Sigmoid colon (tissue), 7 donors: ENCODE measurements at regions of chr5 and their contacts with region 1.

Region 1: DNA sequence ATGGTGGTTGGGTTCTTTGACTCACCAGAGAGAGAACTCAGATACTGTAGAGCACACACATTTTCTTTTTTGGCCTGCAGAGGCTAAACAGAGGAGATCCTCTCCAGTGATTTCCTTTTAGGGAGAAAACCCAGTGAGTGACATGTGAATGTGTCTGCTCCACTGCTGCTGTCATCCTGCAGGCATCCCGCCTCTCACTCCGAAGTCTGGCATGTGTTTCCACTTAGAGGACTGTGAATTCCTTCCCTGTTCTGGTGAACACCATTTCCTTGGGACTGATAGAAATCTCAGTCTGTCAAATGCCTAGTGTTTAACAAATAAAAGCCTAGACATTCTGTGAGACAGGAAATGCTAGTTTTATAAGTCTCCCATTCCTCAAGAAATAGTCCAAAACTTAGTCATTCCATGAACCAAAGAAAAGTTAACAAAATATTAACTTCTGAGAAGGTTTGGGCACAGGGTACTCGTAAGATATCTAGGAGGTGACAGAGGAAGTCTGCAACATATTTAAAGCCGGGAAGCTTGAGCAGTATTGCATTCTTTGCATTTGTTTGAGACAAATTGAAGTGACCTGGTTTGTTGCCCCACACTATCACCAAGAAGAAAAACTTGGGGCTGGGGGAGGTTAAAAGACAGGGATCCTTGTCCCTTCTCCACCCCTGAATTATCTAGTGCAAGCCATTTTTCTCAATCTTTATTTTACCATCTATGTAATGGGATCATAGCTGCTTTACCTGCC is 74.9 kb upstream of the NIPAL4 start:
- DNase-seq: peak; percentile 91
- H3K4me3 ChIP-seq: no peak overlapping the region
- H3K27ac ChIP-seq: peak overlapping the region; percentile 82 to 94 (median 86)
- H3K4me1 ChIP-seq: peaks cover 0 to 90% (median 73%) of the 10 kb centered on the region in 4 donors
- H3K27me3 ChIP-seq: no peaks in the 10 kb centered on the region
- CTCF ChIP-seq: no peak
- EP300 ChIP-seq: peak in 3 of 4 donors; percentile 43 to 78 (median 75)
- POLR2A ChIP-seq: no peak

Region 2: GRCh38 chr5:157464519-157465171 is 79.5 kb after region 1 on chr5:
- intact Hi-C with region 1: loop called (anchors 5 kb)
- DNase-seq: peak; percentile 83
- H3K4me3 ChIP-seq: no peak overlapping the region
- H3K27ac ChIP-seq: peak overlapping the region; percentile 53 to 81 (median 72)
- H3K4me1 ChIP-seq: peaks cover 0 to 55% (median 34%) of the 10 kb centered on the region in 4 donors
- H3K27me3 ChIP-seq: no peaks in the 10 kb centered on the region
- CTCF ChIP-seq: no peak
- EP300 ChIP-seq: peak in 2 of 4 donors; percentile 17 to 37
- POLR2A ChIP-seq: no peak

Region 3: DNA sequence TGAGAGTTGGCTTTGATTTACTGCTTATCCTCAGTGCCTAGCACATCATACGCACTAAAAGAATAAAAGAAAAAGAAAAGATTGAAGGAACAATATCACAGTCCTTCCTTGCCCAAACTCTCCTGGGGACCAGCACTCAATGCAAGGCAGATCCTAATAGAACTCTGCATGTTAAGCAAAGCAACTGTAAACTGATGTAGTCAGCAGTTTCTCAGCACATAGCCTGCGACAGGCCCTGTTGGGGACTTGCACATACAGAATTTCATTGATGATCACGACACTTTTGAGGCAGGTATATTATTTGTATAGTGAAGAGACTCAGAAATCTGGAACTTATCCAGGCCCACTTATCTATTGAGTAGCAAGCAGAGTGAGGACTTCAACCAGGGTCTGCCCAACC is 90.3 kb after region 1 on chr5:
- intact Hi-C with region 1: no loop called
- DNase-seq: no peak
- H3K4me3 ChIP-seq: no peak overlapping the region
- H3K27ac ChIP-seq: peak overlapping the region in 3 of 4 donors; percentile 81 to 88 (median 86)
- H3K4me1 ChIP-seq: peaks cover 0 to 87% (median 54%) of the 10 kb centered on the region in 4 donors
- H3K27me3 ChIP-seq: no peaks in the 10 kb centered on the region
- CTCF ChIP-seq: no peak
- EP300 ChIP-seq: no peak
- POLR2A ChIP-seq: no peak

Region 4: DNA sequence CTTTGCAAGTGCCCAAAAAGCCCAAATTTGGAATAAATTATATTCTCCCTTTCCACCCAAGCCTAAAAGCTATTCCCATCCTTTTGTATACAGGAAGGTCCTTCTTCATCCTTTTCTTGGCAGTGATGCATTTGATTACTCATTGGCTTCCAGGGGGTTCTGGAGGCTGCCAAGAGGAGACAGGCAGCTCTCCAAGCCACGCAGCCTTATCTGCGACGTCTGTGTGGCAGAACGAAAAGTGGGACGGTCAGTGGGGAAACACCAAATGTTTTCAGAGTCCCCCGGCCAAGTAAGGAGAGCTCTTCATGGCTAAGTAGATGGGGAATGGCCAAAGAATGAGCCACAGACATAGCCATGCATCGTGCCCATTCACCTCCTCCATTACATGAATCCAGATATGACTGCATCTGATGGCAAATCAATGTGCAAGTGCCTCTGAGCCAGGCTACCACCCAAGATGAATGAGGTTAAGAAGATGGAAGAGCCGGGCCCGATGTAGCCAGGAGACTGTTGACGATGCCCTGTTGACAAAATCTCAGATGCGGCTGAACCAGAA is 178.3 kb after region 1 on chr5:
- intact Hi-C with region 1: loop called (anchors 5 kb)
- DNase-seq: no peak
- H3K4me3 ChIP-seq: no peak overlapping the region
- H3K27ac ChIP-seq: peak overlapping the region; percentile 79 to 95 (median 88)
- H3K4me1 ChIP-seq: peaks cover 0 to 96% (median 80%) of the 10 kb centered on the region in 4 donors
- H3K27me3 ChIP-seq: no peaks in the 10 kb centered on the region
- CTCF ChIP-seq: no peak
- EP300 ChIP-seq: no peak
- POLR2A ChIP-seq: no peak